Aorta (tissue), 5 donors: ENCODE measurements at regions of chr5 and their contacts with region 1.

Region 1: GRCh38 chr5:61055434-61056006 is 106.7 kb downstream of the SMIM15 start:
- DNase-seq: no peak
- ATAC-seq: no peak
- H3K4me3 ChIP-seq: no peak overlapping the region
- H3K27ac ChIP-seq: no peak overlapping the region
- H3K4me1 ChIP-seq: no peaks in the 10 kb centered on the region
- H3K27me3 ChIP-seq: no peaks in the 10 kb centered on the region

Region 2: GRCh38 chr5:61666064-61666621 is 610.6 kb after region 1 on chr5:
- intact Hi-C with region 1: loop called in 1 of 2 experiments (anchors 10 kb)
- DNase-seq: peak in 1 of 2 donors; percentile 50
- ATAC-seq: no peak
- H3K4me3 ChIP-seq: no peak overlapping the region
- H3K27ac ChIP-seq: no peak overlapping the region
- H3K4me1 ChIP-seq: no peaks in the 10 kb centered on the region
- H3K27me3 ChIP-seq: no peaks in the 10 kb centered on the region